ENCODE measurements at regions of chr16 and their contacts with region 1.

Region 1: DNA sequence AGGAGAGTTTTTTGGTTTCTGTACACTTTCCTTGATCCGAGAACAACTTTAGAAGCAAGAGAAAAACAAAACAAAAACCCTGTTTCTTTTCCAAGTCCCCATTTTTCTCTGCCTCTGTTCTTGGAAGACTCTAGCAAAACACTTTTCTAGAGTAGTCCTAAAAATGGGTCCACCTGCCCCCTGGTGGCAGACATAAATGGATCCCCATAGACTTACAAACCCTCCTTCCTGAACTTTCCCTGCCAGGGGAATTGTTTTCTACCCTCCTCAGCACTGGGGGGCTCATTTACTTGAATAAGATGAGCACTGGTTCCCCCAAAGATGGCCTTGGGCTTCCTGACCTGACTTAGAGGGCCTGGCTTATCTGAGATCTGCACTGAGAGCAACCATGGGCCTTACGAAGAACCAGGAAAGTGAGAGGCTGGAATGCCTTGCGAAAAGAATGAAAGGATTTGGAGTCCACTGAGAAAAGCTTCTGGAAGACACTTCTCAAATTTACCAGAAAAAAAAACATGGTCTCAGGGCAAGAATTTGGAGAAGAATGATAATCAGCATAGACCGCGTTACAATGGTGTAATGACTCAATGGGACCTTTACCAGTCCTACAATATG is 48.0 kb upstream of the CDYL2 start:
- H3K4me3 ChIP-seq: no peak overlapping the region
- H3K27ac ChIP-seq: no peak overlapping the region
- H3K4me1 ChIP-seq: no peaks in the 10 kb centered on the region
- CTCF ChIP-seq: peak; percentile 34; the same call in 1 of the 2 replicates

Region 2: DNA sequence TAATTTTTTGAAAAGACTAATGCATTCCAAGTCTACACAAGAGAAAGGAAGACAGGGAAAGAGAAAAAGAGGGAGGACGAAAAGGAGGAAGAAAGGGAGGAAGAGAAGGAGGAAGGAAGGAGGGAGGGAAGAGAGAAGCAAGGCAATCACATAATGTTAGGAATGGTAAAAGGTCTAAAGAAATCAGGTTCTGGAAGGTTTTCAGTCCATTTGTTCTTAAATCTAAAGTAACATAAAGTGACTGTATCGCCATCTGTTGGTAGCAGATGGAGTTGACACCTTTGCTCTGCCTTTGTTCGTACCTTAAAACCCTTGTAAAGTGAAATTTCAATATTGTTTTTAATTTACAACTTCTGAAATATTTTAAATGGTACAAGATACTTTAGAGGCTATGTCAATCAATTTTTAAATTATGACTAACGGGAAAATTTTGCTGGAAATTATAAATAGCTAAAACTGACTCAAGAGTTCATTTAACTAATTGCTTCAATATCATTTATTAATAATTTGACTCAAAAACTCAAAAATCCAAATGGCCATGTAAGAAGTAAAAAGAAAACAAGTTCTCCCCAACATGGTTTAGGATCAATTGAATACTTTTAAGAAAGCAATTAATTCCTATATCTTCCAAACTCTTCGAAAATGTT is 27.5 kb before region 1 on chr16:
- CTCF ChIA-PET with region 1: interaction called, 10 read pairs
- POLR2A ChIA-PET with region 1: no interaction called
- H3K4me3 ChIP-seq: no peak overlapping the region
- H3K27ac ChIP-seq: no peak overlapping the region
- H3K4me1 ChIP-seq: no peaks in the 10 kb centered on the region
- CTCF ChIP-seq: 0 out of 2 replicates have a peak, but pooled peaks have one; percentile 21